K562 (cell line): ENCODE measurements at regions of chr2 and their contacts with region 1.

Region 1: DNA sequence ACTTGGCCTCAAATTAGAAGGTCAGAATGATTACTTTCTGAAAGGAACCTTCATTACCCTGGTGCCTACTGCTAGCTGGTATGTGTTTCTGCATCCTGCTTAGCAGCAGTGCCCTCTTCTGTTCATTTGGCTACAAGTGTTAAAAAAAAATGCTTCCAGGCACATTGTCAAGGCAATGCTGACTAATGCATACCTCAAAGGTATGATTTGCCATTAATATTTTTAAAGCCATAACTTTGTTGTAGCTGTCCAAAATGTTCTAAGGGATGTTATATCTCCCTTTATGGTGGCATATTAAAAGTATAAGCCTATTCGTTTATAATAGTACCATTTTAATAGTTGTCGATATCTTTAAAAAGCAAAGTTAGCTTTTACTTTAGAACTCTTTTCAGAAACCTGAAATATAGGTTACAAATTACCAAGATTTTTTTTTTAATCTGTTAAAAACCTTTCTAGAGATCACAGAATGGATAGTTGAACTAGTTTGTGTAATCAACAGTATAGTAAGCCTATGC is 52.0 kb upstream of the FAM171B start:
- DNase-seq: peak in 3 of 4 experiments; percentile 33 to 63 (median 44)
- ATAC-seq: peak; percentile 96
- H3K4me3 ChIP-seq: no peak overlapping the region
- H3K27ac ChIP-seq: no peak overlapping the region
- H3K4me1 ChIP-seq: no peaks in the 10 kb centered on the region
- H3K27me3 ChIP-seq: no peaks in the 10 kb centered on the region
- CTCF ChIP-seq: peak; percentile 69 to 93 (median 71)
- EP300 ChIP-seq: no peak
- POLR2A ChIP-seq: no peak
- RAD21 ChIP-seq: peak; percentile 94 to 96

Region 2: DNA sequence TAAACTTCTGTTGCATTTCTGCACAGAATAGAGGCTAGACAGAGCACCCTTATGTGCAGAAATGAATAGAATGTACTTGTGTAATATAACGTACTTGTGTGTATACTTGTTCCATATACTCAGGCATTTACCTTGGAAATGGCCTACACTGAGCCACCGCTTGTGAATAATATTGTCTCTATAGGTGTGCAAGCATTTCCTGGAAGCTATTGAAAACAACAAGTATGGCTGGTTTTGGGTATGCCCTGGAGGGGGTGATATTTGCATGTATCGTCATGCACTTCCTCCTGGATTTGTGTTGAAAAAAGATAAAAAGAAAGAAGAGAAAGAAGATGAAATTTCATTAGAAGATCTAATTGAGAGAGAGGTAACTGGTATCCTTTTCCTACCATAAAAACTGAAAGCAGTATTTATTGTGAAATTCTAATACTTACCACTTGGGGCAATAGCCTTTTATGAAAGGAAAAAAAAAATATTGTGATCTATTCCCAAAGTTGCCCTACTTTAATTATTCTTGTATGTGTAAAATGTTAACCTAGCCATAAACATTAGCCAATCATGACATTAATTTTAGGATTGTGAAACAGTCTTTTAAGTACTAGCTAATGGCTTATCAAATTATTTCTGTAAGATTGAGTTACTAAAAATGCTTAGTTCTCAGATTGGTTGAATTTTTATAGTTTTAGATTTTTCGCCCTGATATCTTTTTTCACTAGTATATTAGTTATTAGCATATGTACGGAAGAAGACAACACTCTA is 137.8 kb before region 1 on chr2:
- CTCF ChIA-PET with region 1: interaction called, 39 read pairs
- POLR2A ChIA-PET with region 1: no interaction called
- in situ Hi-C with region 1: loop called (anchors 10 kb)
- intact Hi-C with region 1: loop called (anchors 1 kb)
- DNase-seq: peak in 1 of 4 experiments; percentile 23
- ATAC-seq: peak; percentile 66
- H3K4me3 ChIP-seq: no peak overlapping the region
- H3K27ac ChIP-seq: no peak overlapping the region
- H3K4me1 ChIP-seq: no peaks in the 10 kb centered on the region
- H3K27me3 ChIP-seq: no peaks in the 10 kb centered on the region
- CTCF ChIP-seq: peak; percentile 28 to 63 (median 30); a peak in 4 of 6 replicates
- EP300 ChIP-seq: no peak
- POLR2A ChIP-seq: no peak
- RAD21 ChIP-seq: peak; percentile 64 to 81